ENCODE measurements at regions of chr1 and their contacts with region 1.

Region 1: DNA sequence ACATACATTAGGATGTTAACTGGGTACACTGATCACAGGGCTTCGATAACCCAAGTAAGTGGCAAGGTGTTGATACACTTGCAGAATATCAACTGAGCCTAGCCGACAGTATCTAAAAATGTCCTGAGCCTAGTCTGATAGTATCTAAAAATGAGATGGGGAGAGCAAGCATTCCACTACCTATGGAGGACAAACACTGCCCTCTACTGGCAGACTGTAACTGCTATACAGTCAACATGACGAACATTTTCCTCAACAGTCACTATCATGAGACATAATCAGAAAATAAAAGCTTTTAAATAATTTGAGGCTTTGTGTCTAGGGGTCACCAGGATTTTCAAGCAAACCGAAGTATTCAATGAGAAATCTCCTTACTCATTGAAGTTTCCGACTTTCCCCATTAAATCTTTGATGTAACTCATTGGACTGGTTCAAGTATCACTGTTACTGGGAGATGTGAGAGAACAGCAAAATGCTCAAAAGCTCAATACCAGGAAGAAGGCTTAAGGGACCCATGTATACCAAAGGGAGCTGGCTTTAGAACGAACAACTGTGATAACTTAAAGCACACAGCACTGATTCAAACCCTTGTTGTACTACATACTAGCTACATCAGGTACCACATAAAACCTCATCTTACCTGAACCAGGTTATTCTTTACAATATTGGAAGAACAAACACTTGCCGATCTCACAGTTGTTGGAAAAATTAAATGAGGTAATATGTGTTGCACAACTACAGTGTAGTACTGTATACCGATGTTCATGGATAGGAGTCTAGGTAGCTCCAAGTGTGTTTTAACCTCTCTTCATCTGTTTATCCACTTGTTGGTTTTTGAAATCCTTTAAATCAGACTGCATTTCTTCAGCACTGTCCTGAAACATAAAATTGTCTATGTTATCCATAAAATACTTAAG is 31.1 kb upstream of the SLC45A3 start:
- DNase-seq: peak; percentile 68 to 83 (median 78)
- H3K4me3 ChIP-seq: no peak overlapping the region
- H3K4me3 Mint-ChIP-seq: no peak overlapping the region
- H3K27ac ChIP-seq: no peak overlapping the region
- H3K27ac Mint-ChIP-seq: no peak overlapping the region
- H3K4me1 ChIP-seq: peaks cover 8 to 14% of the 10 kb centered on the region in 2 donors
- H3K4me1 Mint-ChIP-seq: peaks cover 34% of the 10 kb centered on the region
- H3K27me3 ChIP-seq: no peaks in the 10 kb centered on the region
- H3K27me3 Mint-ChIP-seq: peaks cover 0 to 1% (median 0%) of the 10 kb centered on the region in 3 donors
- CTCF ChIP-seq: peak; percentile 91

Region 2: GRCh38 chr1:205536759-205537361 is 174.5 kb before region 1 on chr1:
- intact Hi-C with region 1: loop called in 1 of 2 experiments (anchors 10 kb)
- DNase-seq: peak in 2 of 3 donors; percentile 14
- H3K4me3 ChIP-seq: peak overlapping the region in 1 of 3 experiments; percentile 5
- H3K4me3 Mint-ChIP-seq: peak overlapping the region in 1 of 2 donors; percentile 71
- H3K27ac ChIP-seq: no peak overlapping the region
- H3K27ac Mint-ChIP-seq: peak overlapping the region in 4 of 7 donors; percentile 1 to 43 (median 20)
- H3K4me1 ChIP-seq: peaks cover 38 to 44% of the 10 kb centered on the region in 2 donors
- H3K4me1 Mint-ChIP-seq: peaks cover 39% of the 10 kb centered on the region
- H3K27me3 ChIP-seq: peaks cover 0 to under 1% of the 10 kb centered on the region in 2 donors
- H3K27me3 Mint-ChIP-seq: peaks cover 3 to 5% (median 4%) of the 10 kb centered on the region in 3 donors
- CTCF ChIP-seq: no peak

Region 3: GRCh38 chr1:205591522-205592351 is 119.6 kb before region 1 on chr1:
- intact Hi-C with region 1: loop called in 1 of 2 experiments (anchors 5 kb)
- DNase-seq: peak; percentile 74 to 80 (median 76)
- H3K4me3 ChIP-seq: peak overlapping the region; percentile 2 to 65 (median 30)
- H3K4me3 Mint-ChIP-seq: peak overlapping the region; percentile 74 to 95
- H3K27ac ChIP-seq: no peak overlapping the region
- H3K27ac Mint-ChIP-seq: peak overlapping the region in 4 of 7 donors; percentile 46 to 83 (median 70)
- H3K4me1 ChIP-seq: peaks cover 14 to 20% of the 10 kb centered on the region in 2 donors
- H3K4me1 Mint-ChIP-seq: peaks cover 31% of the 10 kb centered on the region
- H3K27me3 ChIP-seq: no peaks in the 10 kb centered on the region
- H3K27me3 Mint-ChIP-seq: peaks cover 0 to 6% (median 2%) of the 10 kb centered on the region in 3 donors
- CTCF ChIP-seq: peak; percentile 95

Region 4: GRCh38 chr1:205658943-205659581 is 52.3 kb before region 1 on chr1:
- intact Hi-C with region 1: loop called (anchors 1 to 2 kb)
- DNase-seq: peak; percentile 61 to 74 (median 70)
- H3K4me3 ChIP-seq: no peak overlapping the region
- H3K4me3 Mint-ChIP-seq: no peak overlapping the region
- H3K27ac ChIP-seq: no peak overlapping the region
- H3K27ac Mint-ChIP-seq: peak overlapping the region in 1 of 7 donors; percentile 37
- H3K4me1 ChIP-seq: peaks cover 10% of the 10 kb centered on the region in 2 donors
- H3K4me1 Mint-ChIP-seq: peaks cover 10% of the 10 kb centered on the region
- H3K27me3 ChIP-seq: no peaks in the 10 kb centered on the region
- H3K27me3 Mint-ChIP-seq: peaks cover 2 to 8% (median 5%) of the 10 kb centered on the region in 3 donors
- CTCF ChIP-seq: peak; percentile 91

Measured in CD14-positive monocyte (primary cell).